ENCODE measurements at regions of chr15 and their contacts with region 1.

Region 1: GRCh38 chr15:59917504-59918157 is 86.5 kb upstream of the FOXB1 start:
- DNase-seq: peak; percentile 92
- H3K4me3 Mint-ChIP-seq: no peak overlapping the region
- H3K27ac Mint-ChIP-seq: peak overlapping the region; percentile 76
- H3K4me1 Mint-ChIP-seq: peaks cover 25% of the 10 kb centered on the region
- H3K27me3 Mint-ChIP-seq: peaks cover 23% of the 10 kb centered on the region

Region 2: GRCh38 chr15:59688841-59689625 is 228.6 kb before region 1 on chr15 and contains the start of gene BNIP2:
- intact Hi-C with region 1: loop called (anchors 1 kb)
- DNase-seq: peak; percentile 100
- H3K4me3 Mint-ChIP-seq: peak within 1 kb of the TSS; percentile 95
- H3K27ac Mint-ChIP-seq: peak within 1 kb of the TSS; percentile 98
- H3K4me1 Mint-ChIP-seq: peaks cover 40% of the 10 kb centered on the region
- H3K27me3 Mint-ChIP-seq: no peaks in the 10 kb centered on the region
- total RNA-seq, gene BNIP2: 55.1 and 57.2 TPM in 2 replicates

Region 3: GRCh38 chr15:59976480-59977271 is 59.0 kb after region 1 on chr15:
- intact Hi-C with region 1: loop called (anchors 5 kb)
- DNase-seq: peak; percentile 90
- H3K4me3 Mint-ChIP-seq: peak overlapping the region; percentile 61
- H3K27ac Mint-ChIP-seq: peak overlapping the region; percentile 71
- H3K4me1 Mint-ChIP-seq: peaks cover 27% of the 10 kb centered on the region
- H3K27me3 Mint-ChIP-seq: peaks cover 18% of the 10 kb centered on the region

Region 4: GRCh38 chr15:60077581-60078359 is 160.1 kb after region 1 on chr15:
- intact Hi-C with region 1: loop called (anchors 2 kb)
- DNase-seq: peak; percentile 64
- H3K4me3 Mint-ChIP-seq: no peak overlapping the region
- H3K27ac Mint-ChIP-seq: peak overlapping the region; percentile 61
- H3K4me1 Mint-ChIP-seq: peaks cover 39% of the 10 kb centered on the region
- H3K27me3 Mint-ChIP-seq: peaks cover 8% of the 10 kb centered on the region

Region 5: DNA sequence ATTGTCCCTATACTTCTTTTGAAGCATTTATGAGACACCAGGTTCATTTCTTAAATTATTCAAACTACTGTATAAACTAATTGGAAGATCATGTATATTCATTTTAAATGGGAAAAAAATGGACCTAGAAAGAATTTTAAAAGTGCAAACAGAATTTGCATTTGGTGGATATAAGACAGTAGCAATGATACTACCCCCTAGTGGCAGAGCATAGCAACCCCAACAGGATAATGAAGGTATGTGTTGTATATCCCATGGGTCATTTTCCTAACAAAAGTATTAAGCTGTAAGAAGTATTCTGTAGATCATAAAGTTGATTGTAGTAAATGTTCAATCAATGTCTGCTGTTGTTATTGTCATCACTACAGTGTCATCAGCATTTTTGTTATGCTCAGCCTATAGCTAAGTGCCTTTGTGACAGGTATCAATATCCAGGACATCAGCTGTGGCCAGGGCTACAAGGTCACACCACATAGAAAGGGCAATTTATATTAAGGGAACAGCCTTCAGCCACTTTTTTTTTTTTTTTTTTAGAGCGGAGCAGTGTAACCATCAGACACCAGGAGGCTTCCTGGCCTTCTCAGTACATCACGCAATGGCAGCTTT is 262.3 kb after region 1 on chr15:
- intact Hi-C with region 1: loop called (anchors 1 kb)
- DNase-seq: peak; percentile 77
- H3K4me3 Mint-ChIP-seq: no peak overlapping the region
- H3K27ac Mint-ChIP-seq: no peak overlapping the region
- H3K4me1 Mint-ChIP-seq: no peaks in the 10 kb centered on the region
- H3K27me3 Mint-ChIP-seq: peaks cover 33% of the 10 kb centered on the region

Region 6: DNA sequence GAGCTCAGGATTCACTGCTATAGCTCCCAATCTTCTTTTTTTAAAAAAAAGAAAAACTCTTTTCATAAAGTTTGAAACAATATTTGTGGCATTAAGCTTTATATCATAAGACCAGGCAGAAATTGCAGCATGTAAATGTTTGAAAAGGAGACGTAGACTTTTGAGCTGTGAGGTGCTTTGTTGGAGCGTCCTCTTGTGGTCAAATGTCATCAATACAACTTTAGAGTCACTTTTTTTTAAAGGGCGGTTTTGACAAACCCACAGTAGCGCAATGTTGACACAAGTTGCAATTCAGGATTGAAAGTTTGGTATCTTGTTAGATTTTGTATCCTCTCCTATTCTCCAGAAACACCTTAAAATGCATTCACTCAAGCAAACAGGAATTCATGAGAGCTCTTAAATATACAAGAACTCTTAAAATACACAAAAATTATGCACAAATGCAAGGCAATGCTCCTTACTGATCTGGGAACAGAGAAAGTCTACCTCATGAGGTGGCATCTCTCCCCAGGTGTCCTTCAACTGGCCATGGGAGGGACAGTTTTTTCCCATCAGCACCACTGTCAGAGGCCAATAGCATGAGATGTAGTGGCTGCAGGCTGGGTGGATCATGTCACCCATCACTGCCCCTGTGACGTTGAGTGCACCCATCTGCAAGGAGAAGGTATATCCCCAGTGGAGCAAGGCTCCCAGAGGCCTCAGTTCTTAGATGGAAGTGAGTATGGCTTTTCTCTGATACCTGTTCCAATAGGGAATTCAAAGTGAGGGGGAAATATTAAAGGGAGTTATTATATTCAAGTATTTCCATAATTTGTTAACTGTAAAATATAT is 409.4 kb after region 1 on chr15:
- intact Hi-C with region 1: loop called (anchors 1 kb)
- DNase-seq: peak; percentile 83
- H3K4me3 Mint-ChIP-seq: no peak overlapping the region
- H3K27ac Mint-ChIP-seq: no peak overlapping the region
- H3K4me1 Mint-ChIP-seq: peaks cover 7% of the 10 kb centered on the region
- H3K27me3 Mint-ChIP-seq: peaks cover 70% of the 10 kb centered on the region

Measured in activated CD4-positive, alpha-beta T cell treated with anti-CD3 and anti-CD28 coated beads, Interleukin-2, amount 10 ng/mL, durations not matched to agents 24 days and 14 days (primary cell).